Posterior cingulate gyrus (tissue), 11 donors: ENCODE measurements at regions of chr7 and their contacts with region 1.

Region 1: DNA sequence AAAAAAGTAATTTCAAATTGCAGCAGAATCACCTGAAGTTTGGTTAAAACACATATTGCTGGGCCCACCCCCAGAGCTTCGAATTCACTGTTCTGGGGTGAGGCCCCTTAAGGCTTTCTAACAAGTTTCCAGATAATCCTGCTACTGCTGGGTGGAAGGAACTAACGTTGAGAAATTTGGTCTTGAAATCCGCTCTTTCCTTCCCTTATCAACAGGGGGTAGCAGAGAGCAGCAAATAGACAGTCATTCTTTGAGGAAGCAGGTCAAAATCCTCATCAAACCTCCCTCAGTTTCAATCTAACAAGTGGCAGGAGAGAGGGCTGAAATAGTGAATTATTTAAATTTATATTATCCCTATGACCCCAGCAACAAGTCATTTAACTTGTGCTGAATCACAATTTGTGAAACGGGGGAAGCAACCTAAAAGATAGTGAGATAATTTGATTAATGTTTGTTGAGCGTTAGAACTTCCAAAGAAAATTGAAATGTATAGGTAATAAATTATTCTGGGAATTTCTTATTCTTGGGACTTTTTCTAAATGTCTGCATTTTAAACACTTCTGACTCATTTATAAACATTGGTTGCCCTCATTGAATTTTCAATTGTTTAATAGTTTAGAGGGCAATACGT is 21.7 kb upstream of the MALSU1 start:
- DNase-seq: no peak

Region 2: GRCh38 chr7:23443974-23444373 is 166.5 kb after region 1 on chr7:
- intact Hi-C with region 1: no loop called
- DNase-seq: no peak

Region 3: GRCh38 chr7:23462846-23463245 is 185.4 kb after region 1 on chr7:
- intact Hi-C with region 1: loop called (anchors 5 kb)
- DNase-seq: no peak